ENCODE measurements at regions of chr3 and their contacts with region 1.

Region 1: DNA sequence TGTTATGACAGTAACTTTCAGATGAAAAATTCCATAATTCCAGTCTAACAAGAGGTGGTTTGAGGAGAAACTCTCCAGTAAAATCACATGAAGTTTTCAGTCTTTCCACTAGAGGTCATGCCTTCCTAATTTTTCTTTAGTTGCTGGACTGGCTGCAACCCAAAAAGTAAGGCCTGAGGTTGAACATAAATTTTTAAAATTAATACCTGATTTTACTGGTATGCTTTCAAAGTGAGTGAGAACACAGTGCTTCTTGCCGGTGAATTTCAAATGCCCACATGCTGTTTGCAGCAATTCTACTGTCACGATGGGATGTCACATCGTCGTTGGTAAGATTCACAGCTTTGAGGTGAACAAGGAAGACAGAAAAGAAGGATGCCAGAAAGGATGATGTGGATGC is 89.0 kb upstream of the FGF12 start:
- DNase-seq: peak; percentile 86
- ATAC-seq: no peak; the same call in 1 of the 2 replicates
- H3K4me3 ChIP-seq: no peak overlapping the region
- H3K27ac ChIP-seq: peak overlapping the region; percentile 35
- H3K4me1 ChIP-seq: peaks cover 43% of the 10 kb centered on the region
- H3K27me3 ChIP-seq: no peaks in the 10 kb centered on the region
- CTCF ChIP-seq: peak; percentile 83

Region 2: GRCh38 chr3:192851821-192852424 is 35.6 kb after region 1 on chr3:
- CTCF ChIA-PET with region 1: no interaction called
- POLR2A ChIA-PET with region 1: no interaction called
- intact Hi-C with region 1: loop called (anchors 2 kb)
- DNase-seq: peak; percentile 99
- ATAC-seq: peak; percentile 62
- H3K4me3 ChIP-seq: peak overlapping the region; percentile 27; the same call in 1 of the 2 replicates
- H3K27ac ChIP-seq: peak overlapping the region; percentile 75
- H3K4me1 ChIP-seq: peaks cover 54% of the 10 kb centered on the region
- H3K27me3 ChIP-seq: no peaks in the 10 kb centered on the region
- CTCF ChIP-seq: no peak

Region 3: GRCh38 chr3:192861972-192862371 is 45.6 kb after region 1 on chr3:
- CTCF ChIA-PET with region 1: no interaction called
- POLR2A ChIA-PET with region 1: no interaction called
- intact Hi-C with region 1: no loop called
- DNase-seq: no peak
- ATAC-seq: no peak
- H3K4me3 ChIP-seq: no peak overlapping the region
- H3K27ac ChIP-seq: no peak overlapping the region
- H3K4me1 ChIP-seq: 0 out of 2 replicates have a peak, but pooled peaks cover 4% of the 10 kb centered on the region
- H3K27me3 ChIP-seq: no peaks in the 10 kb centered on the region
- CTCF ChIP-seq: no peak

Region 4: DNA sequence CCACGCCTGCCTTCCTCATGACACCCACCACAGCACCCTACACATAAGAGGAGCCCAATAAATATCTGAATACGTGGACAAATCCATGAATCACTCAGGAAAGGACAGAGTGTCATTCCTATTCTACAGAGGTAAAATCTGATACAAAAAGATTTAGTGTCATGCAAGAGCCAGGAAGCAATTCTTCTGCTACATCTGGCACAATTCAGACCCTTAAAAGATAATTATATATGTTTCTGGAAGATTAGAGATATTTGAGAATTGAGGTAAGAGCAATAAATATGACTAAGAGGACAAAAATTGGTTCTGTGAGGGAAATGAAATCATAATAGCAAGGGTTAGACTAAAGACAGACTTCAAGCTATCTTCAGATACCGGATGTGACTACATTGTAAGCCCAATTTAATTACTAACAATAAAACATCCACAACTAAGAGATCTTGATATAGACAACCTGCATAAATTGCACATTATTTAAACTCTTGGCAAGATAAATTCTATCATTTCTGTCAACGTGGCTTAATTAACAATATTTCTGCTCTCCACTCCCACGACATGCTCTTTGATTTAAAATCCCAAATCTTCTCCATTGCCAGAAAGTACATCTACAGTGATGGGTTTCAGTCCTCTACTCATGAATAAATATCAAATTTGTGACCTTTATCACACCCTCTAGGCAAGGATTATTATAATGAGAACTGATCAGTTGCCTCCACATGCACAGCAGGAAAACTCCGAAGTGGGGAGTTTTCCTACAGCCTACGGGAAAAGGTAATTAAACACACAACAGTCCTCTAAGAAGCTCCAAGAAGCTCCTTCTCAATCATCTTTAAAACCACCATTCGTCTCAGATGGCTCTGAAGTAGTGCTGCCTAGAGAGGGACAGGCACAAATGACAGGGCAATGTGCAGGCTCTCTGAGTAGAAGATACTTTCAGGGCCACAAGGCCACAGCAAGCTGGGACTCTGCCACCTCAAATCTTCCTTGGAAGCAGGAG is 68.7 kb after region 1 on chr3:
- CTCF ChIA-PET with region 1: interaction called, 3 read pairs
- POLR2A ChIA-PET with region 1: no interaction called
- intact Hi-C with region 1: loop called (anchors 2 kb)
- DNase-seq: peak; percentile 92
- ATAC-seq: peak; percentile 48
- H3K4me3 ChIP-seq: no peak overlapping the region
- H3K27ac ChIP-seq: peak overlapping the region; percentile 98
- H3K4me1 ChIP-seq: peaks cover 91% of the 10 kb centered on the region
- H3K27me3 ChIP-seq: no peaks in the 10 kb centered on the region
- CTCF ChIP-seq: no peak

Region 5: DNA sequence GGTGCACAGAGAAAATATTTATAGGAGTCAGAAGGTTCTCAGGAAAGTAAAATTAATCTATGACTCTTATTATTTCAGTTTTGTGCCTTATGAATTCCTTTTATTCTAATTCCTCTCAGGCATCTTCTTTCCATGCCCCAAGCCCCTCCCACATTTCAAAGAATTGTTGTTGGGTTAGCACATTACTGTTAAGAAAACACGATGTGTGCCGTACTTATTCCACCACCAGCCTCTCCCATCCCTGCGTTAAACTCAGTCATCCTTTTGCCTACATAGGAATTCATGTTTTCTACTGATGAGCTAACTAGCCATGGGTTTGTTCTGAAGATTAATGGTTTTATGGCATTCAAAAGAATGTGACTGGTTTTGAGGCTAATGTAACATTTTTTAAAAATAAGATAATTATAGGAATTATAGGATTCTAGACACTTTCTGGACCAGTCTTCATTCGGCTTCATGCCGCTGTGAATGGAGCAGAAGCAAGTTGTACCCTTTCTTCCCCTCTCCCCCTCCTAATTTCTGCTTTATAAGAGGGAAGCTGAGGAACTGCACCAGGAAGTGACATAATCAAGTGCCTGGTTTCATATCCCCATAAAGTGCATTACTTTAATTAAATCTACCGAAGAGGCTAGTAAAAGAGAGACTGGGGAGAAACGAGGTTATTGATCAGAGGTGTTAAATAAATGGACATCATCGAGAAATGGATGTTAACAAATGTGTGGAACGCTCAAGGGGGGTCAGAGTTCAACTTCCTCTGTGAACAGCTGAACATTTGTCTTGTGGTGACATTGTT is 113.6 kb after region 1 on chr3:
- CTCF ChIA-PET with region 1: no interaction called
- POLR2A ChIA-PET with region 1: interaction called, 12 read pairs
- intact Hi-C with region 1: loop called (anchors 1 kb)
- DNase-seq: no peak
- ATAC-seq: no peak
- H3K4me3 ChIP-seq: no peak overlapping the region
- H3K27ac ChIP-seq: peak overlapping the region; percentile 79
- H3K4me1 ChIP-seq: peaks cover 46% of the 10 kb centered on the region
- H3K27me3 ChIP-seq: no peaks in the 10 kb centered on the region
- CTCF ChIP-seq: no peak

Region 6: GRCh38 chr3:193129601-193130000 is 313.2 kb after region 1 on chr3:
- CTCF ChIA-PET with region 1: no interaction called
- POLR2A ChIA-PET with region 1: no interaction called
- intact Hi-C with region 1: loop called (anchors 10 kb)
- DNase-seq: peak; percentile 45
- ATAC-seq: peak; percentile 38
- H3K4me3 ChIP-seq: no peak overlapping the region
- H3K27ac ChIP-seq: no peak overlapping the region
- H3K4me1 ChIP-seq: no peaks in the 10 kb centered on the region
- H3K27me3 ChIP-seq: peaks cover 70% of the 10 kb centered on the region
- CTCF ChIP-seq: peak; percentile 65

Region 7: GRCh38 chr3:193572426-193572908 is 756.1 kb after region 1 on chr3:
- CTCF ChIA-PET with region 1: interaction called, 6 read pairs
- POLR2A ChIA-PET with region 1: no interaction called
- intact Hi-C with region 1: loop called (anchors 1 kb)
- DNase-seq: peak; percentile 80
- ATAC-seq: peak; percentile 93
- H3K4me3 ChIP-seq: no peak overlapping the region
- H3K27ac ChIP-seq: no peak overlapping the region
- H3K4me1 ChIP-seq: peaks cover 6% of the 10 kb centered on the region
- H3K27me3 ChIP-seq: peaks cover 41% of the 10 kb centered on the region
- CTCF ChIP-seq: peak; percentile 96